AG04449 (cell line): ENCODE measurements at regions of chr6 and their contacts with region 1.

Region 1: DNA sequence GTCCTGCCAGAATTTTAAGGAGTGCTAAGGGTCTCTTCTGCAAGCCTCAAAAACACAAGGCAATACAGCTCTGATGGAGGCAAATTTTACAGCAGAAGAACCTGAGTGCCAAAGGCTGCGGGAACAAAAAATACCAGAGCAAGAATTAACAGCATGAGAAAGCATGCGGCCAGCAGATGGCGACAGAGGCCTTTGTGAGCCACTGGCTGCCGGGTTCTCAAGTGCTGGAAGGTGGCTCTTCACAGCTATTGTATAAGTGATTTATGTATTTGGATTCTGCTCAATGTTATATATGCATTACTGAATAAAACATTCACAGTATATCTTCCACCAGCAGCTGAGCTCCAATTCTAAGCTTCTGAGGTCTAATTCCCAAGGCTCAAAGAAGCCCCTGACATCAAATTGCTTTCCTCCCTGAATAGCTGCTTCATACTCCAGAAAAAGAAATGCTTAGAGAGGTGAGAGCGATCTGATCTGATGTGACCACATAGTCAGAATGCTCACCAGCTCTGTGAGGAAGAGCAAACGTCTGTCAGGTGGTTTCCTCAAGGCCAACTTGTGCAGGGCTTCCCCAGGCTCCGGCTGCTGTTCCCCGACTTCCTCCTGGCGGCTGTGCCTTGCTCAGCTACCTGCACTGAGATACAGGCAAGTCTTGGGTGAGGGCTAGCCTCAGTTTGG is 58.6 kb downstream of the PPP1R3G start:
- DNase-seq: no peak
- H3K4me3 ChIP-seq: no peak overlapping the region
- CTCF ChIP-seq: peak; percentile 86

Region 2: DNA sequence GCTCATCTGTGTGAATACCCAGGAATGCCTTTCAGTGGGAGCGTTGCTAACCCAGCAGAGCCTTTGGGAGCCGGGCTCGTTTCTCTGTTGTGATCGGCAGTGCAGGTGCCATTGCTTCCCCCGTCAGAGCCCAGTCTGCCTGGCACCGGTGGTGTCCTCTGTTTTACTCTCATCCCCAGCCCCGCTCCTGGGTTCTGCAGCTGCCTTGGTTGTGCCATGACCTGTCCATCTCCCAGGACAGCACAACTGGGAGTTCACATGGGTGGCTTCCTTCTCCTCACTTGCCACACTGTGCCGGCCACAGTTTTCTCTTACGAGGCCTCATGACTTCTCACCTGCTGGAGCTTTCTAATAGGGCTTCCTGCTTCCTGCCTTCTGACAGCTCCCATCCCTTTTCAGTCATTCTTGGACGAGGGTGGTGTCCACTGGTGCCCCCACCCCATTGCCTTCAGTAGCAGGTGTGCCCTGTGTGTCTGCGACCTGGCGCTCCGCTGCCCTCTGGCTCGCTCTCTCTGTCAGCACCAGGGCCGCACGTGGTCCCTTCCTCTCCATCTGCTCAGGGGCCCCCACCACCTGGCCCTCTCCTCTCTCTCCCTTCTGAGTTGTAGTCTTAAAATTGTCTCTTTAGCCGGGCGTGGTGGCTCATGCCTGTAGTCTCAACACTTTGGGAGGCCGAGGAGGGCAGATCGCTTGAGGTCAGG is 250.8 kb before region 1 on chr6:
- CTCF ChIA-PET with region 1: no interaction called
- POLR2A ChIA-PET with region 1: no interaction called
- DNase-seq: no peak
- H3K4me3 ChIP-seq: no peak overlapping the region
- CTCF ChIP-seq: no peak

Region 3: DNA sequence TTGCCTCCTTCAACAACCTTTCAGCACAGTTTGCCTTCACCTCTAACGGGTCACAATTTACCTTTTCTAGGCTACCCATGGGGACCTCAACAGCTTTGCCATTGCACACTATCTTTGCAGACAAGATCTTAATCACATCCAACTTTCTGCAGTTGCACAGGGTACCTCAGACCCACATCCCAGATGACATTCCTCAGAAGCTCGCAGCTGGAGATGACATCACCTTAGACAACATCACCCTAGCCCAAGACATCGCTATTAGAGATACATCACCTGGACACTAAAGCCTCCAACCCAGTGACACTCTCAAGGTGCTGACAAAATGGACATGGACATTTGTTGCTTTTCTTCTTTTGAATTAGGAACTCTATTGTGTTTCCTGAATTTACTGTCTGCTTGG is 101.3 kb before region 1 on chr6:
- CTCF ChIA-PET with region 1: no interaction called
- POLR2A ChIA-PET with region 1: no interaction called
- DNase-seq: no peak
- H3K4me3 ChIP-seq: no peak overlapping the region
- CTCF ChIP-seq: no peak

Region 4: DNA sequence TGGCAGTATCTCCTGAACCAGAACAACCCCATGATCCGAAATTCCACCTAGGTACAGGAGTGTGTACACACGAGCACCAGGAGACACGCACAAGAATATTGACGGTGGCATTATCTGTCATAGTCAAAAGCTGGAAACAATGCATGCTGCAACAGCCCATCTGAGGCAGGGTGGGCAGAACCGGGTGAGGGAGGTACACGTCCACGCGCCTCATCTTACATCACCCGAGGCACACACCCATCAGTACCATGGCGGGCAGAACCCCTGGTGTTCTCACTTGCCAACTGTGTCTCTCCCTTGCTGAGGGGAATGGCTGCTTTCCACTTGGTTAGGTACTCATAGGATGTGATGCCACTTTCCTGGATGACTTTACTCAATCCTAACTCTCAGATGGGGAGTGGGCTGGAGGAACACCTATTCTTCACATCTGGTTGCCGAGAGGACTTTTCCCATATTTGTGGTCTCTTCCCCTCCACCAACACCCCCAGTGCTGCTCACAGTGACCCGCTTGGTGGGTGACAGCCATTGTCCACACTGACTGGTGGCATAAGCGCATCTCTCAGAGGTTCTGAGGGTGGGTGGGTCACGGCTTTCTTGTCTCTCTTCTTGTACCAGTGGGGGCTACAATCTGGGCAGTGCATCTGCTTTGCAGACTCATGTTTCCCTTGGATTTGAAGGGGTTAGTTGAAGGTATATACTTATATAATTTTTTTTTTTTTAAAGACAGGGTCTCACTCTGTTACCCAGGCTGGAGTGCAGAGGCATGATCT is 45.1 kb before region 1 on chr6:
- CTCF ChIA-PET with region 1: no interaction called
- POLR2A ChIA-PET with region 1: no interaction called
- DNase-seq: no peak
- H3K4me3 ChIP-seq: no peak overlapping the region
- CTCF ChIP-seq: no peak

Region 5: DNA sequence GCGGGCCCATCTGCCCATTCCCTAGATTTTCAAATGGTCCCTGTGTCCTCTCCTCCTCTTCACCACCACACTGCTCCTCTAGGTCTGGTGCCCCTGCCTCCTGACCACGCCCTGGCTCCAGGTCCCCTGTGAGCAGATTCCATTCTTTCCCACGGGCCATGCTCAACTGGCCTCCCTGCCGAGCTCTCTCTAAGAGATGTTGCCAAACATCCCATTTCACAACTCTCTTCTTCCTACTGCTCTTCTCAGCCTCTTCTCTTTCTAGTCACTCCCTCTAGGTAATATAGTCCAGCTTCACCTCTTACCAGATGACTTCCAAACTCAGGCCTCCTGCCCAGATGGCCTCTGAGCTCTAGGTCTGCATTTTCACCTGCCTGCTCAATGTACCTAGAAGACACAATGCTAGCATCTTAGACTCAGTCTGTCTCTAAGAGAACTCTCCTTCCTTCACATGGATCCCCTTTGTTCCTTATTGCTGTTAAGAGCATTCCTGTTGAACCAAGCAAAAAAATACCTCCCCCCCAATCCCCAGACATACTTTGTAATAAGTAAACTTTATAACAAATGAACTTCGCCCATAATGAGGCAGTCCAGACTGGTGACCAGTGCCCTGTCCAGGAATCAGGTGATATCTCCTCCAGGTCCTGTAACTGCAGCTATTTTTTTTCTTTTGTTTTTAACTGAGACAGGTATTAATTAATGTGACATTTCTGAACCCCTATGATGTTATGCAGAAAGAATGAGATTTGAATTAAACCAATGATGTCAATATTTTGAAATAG is 37.9 kb after region 1 on chr6:
- CTCF ChIA-PET with region 1: interaction called, 10 read pairs
- POLR2A ChIA-PET with region 1: no interaction called
- DNase-seq: no peak
- H3K4me3 ChIP-seq: no peak overlapping the region
- CTCF ChIP-seq: no peak

Region 6: GRCh38 chr6:5214570-5215052 is 70.8 kb after region 1 on chr6:
- CTCF ChIA-PET with region 1: interaction called, 75 read pairs
- POLR2A ChIA-PET with region 1: no interaction called
- DNase-seq: no peak
- H3K4me3 ChIP-seq: no peak overlapping the region
- CTCF ChIP-seq: peak; percentile 93

Region 7: DNA sequence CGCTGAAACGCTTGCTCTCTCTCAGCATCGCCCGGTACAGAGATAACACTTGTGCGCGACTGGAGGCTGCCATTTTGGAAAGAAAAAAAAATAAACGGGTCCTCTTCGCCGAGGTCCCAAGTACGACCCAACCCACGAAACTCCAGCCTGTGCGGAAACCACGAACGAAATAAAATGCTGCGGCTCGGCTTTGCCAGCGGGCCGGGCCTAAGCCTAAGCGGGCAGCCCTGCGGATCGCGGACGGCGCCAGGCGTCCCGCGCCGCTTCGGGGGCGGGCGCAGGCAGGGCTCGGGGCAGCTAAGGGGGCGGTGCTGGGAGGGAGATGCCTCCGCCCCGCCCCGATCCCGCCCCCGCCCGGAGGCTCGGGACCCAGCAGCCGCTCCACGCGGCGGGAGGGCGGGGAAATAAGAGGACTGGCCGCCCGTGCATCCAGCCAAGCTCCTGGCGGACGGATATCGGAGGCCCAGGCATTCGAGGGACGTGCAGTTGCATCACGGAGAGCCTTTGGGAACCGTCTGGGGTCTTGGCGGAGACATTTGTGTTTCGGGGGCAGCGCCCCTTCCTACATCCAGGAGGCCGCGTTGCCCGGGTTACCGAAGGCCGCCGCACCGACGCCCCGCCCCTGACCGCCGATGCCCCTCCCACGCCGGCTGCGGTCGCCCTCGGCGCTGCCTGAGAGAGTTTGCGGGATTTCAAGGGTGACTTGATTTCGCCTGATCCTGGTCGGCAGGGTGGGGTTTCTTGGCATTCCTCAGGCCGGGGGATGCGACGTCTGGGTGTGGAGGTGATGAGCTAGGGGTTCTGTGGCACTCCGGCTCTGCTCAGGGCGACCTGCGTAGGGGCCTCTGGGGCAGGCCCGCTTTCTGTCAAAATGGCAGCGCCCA is 117.1 kb after region 1 on chr6 and contains the starts of genes FARS2 and LYRM4:
- CTCF ChIA-PET with region 1: interaction called, 17 read pairs
- POLR2A ChIA-PET with region 1: interaction called, 3 read pairs
- DNase-seq: no peak
- H3K4me3 ChIP-seq: peak within 1 kb of the TSS; percentile 94
- CTCF ChIP-seq: peak; percentile 35

Region 8: GRCh38 chr6:5379647-5380242 is 236.0 kb after region 1 on chr6:
- CTCF ChIA-PET with region 1: interaction called, 47 read pairs
- POLR2A ChIA-PET with region 1: no interaction called
- DNase-seq: no peak
- H3K4me3 ChIP-seq: no peak overlapping the region
- CTCF ChIP-seq: peak; percentile 37

Region 9: GRCh38 chr6:6547110-6547879 is 1403.5 kb after region 1 on chr6:
- CTCF ChIA-PET with region 1: interaction called, 18 read pairs
- POLR2A ChIA-PET with region 1: no interaction called
- DNase-seq: peak; percentile 21
- H3K4me3 ChIP-seq: peak overlapping the region; percentile 40
- CTCF ChIP-seq: peak; percentile 91